AG04449 (cell line): ENCODE measurements at regions of chr2 and their contacts with region 1.

Region 1: DNA sequence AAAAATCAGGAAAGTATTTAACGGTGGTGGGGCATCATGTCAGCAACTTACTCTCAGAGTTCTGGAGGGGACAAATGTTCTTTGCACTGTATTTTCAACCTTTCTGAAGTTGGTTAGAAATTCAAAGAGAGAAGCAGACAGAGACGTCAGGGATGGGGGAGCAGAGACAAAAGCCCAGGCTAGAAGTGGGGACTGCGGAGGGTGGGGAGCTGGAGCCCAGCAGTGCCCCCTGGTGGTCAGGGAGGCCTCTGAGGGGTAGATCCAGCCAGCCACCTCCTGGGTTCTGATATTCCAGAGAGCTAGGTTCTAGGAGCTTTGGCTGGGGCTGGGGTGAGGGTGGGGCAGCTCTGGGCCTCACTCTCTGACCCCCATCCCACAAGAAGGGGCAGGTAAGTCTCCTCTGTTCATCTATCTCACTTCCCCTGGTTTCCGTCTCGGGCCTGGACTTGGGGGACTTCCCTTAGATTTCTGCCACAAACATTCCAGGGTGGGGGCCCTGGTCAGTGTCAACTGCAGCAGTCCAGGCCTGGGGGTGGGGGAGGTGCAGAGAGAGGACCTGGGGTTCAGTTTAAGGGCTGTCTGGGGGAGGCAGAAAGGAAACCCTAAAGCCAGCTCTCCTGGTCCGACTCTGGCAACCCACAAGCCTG is 8.9 kb downstream of the TNS1 start:
- DNase-seq: no peak
- H3K4me3 ChIP-seq: no peak overlapping the region
- CTCF ChIP-seq: peak; percentile 89

Region 2: GRCh38 chr2:217746808-217747207 is 247.1 kb before region 1 on chr2:
- CTCF ChIA-PET with region 1: no interaction called
- POLR2A ChIA-PET with region 1: no interaction called
- DNase-seq: no peak
- H3K4me3 ChIP-seq: no peak overlapping the region
- CTCF ChIP-seq: no peak

Region 3: GRCh38 chr2:217851191-217852020 is 142.5 kb before region 1 on chr2:
- CTCF ChIA-PET with region 1: interaction called, 10 read pairs
- POLR2A ChIA-PET with region 1: no interaction called
- DNase-seq: no peak
- H3K4me3 ChIP-seq: no peak overlapping the region
- CTCF ChIP-seq: no peak

Region 4: DNA sequence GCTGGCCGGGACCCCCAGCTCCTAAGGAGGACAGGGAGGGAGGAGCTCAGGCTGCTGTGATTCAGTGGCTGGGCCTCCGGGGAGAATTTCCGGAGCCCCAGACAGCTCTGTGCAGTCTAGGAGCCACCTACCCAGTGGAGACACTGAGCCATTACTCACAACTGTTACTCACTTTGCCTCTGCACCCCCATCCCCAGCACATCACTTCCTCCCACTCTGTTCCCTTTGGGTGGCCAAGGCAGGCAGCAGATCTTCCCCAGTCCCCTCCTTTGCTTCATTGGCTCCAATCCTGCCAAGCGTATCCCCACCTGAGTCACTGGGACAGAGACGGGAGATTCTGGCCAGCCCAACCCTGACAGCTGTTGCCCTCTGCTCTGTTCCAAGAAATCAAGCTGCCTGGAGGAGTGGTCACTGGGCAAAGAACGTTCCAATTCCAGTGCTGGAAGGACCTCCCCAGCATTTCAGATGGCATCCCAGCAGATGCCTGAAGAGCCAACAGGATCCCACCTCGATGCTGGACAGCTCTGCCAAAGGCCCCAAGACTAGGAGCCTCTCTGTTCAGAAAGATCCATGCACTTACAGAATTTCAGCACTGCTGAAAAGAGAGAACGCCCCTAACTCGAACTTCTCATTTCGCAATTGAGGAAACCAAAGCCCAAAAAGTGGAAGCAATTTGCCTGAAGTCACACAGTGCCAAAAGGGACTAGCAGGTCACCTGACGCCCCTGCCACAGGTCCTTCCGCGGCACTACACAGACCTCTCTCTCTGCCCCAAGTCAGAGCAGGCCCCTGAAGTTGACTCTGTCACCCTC is 59.4 kb before region 1 on chr2:
- CTCF ChIA-PET with region 1: interaction called, 17 read pairs
- POLR2A ChIA-PET with region 1: interaction called, 3 read pairs
- DNase-seq: peak; percentile 89
- H3K4me3 ChIP-seq: peak overlapping the region; percentile 1
- CTCF ChIP-seq: no peak

Region 5: DNA sequence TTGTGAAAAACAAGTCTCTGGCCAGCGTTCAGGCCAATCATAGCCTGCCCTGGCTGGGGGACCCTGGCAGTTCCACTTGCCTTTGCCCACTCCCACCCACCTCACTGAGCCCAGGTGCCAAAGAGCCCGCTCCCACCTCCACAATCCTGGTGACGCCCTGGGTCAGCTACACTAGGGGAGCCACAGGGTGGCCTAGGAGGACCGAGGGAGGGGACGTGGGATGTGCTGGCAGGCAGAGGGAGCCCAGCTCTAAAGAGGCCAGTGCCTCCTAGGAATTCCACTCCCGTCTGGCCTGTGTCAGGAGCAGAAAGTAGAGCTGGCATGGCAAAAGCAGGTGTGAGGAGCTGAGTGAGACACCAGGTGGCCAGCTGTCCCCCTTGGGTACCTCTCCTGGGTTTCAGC is 40.4 kb before region 1 on chr2:
- CTCF ChIA-PET with region 1: interaction called, 15 read pairs
- POLR2A ChIA-PET with region 1: no interaction called
- DNase-seq: no peak
- H3K4me3 ChIP-seq: no peak overlapping the region
- CTCF ChIP-seq: no peak

Region 6: GRCh38 chr2:218003981-218004419 is 10.1 kb after region 1 on chr2:
- CTCF ChIA-PET with region 1: interaction called, 54 read pairs
- POLR2A ChIA-PET with region 1: interaction called, 14 read pairs
- DNase-seq: peak; percentile 80
- H3K4me3 ChIP-seq: no peak overlapping the region; the same call in 1 of the 2 replicates
- CTCF ChIP-seq: no peak

Region 7: GRCh38 chr2:218033590-218034496 is 39.9 kb after region 1 on chr2:
- CTCF ChIA-PET with region 1: interaction called, 13 read pairs
- POLR2A ChIA-PET with region 1: no interaction called
- DNase-seq: no peak
- H3K4me3 ChIP-seq: no peak overlapping the region
- CTCF ChIP-seq: no peak